ENCODE measurements at regions of chr20 and their contacts with region 1.

Region 1: GRCh38 chr20:45890985-45891983 is at the starts of genes CTSA and NEURL2:
- DNase-seq: peak; percentile 74 to 81 (median 79)
- H3K4me3 ChIP-seq: peak within 1 kb of the TSS; percentile 52 to 86 (median 80)
- H3K27ac ChIP-seq: peak within 1 kb of the TSS; percentile 25 to 70
- H3K4me1 ChIP-seq: peaks cover 8 to 49% (median 41%) of the 10 kb centered on the region in 4 experiments
- H3K27me3 ChIP-seq: no peaks in the 10 kb centered on the region

Region 2: GRCh38 chr20:45798935-45799642 is 92.2 kb before region 1 on chr20:
- CTCF ChIA-PET with region 1: interaction called, 14 read pairs
- POLR2A ChIA-PET with region 1: no interaction called
- DNase-seq: peak; percentile 63 to 77 (median 72)
- H3K4me3 ChIP-seq: no peak overlapping the region
- H3K27ac ChIP-seq: no peak overlapping the region
- H3K4me1 ChIP-seq: peaks cover 0 to 7% (median 0%) of the 10 kb centered on the region in 4 experiments
- H3K27me3 ChIP-seq: no peaks in the 10 kb centered on the region

Region 3: GRCh38 chr20:45905505-45906079 is 14.3 kb after region 1 on chr20:
- CTCF ChIA-PET with region 1: interaction called, 16 read pairs
- POLR2A ChIA-PET with region 1: interaction called, 3 read pairs
- DNase-seq: no peak
- H3K4me3 ChIP-seq: no peak overlapping the region
- H3K27ac ChIP-seq: no peak overlapping the region
- H3K4me1 ChIP-seq: peaks cover 0 to 18% (median 9%) of the 10 kb centered on the region in 4 experiments
- H3K27me3 ChIP-seq: no peaks in the 10 kb centered on the region

Region 4: DNA sequence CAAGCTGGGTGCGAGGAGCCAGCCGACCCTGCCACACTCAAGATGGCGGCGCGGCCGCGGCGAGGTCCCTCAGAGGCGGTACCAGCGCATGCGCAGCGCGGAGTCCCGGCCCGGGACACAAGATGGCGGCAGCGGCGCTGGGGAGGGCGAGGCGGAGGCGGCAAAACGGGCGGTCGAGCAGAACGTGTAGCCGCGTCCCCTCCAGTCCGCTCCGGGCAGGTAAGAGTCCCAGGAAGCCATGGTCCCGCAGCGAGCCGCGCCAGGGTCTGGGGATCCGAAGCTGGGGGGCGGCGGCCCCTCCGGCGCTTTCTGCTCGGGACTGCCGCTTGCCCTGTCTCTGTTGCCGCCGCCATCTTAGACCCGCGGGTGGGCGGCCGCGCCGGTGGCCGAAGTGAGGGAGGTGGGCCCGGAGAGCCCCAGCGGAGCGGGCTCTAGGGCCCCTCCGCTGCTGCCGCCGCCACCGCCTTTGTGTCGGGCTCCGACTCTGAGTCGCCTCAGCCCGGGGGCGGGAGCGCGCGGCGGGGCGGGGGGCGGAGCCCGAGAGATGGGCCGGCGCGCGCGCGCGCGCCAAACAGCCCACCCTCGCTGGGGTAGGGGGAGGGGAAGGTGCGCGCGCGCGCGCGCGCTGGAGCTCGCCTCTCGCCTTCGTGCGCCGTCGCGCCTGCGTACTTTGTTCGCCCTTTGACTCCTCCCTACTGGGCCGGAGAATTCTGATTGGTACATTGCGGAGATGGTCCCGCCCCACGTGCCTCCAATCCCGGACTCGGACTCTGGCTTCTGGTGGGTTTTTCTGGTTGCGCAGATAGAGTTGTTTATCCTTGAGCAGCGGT is 43.5 kb after region 1 on chr20 and contains the start of gene PCIF1:
- CTCF ChIA-PET with region 1: interaction called, 9 read pairs
- POLR2A ChIA-PET with region 1: interaction called, 10 read pairs
- DNase-seq: peak; percentile 97 to 99 (median 98)
- H3K4me3 ChIP-seq: peak within 1 kb of the TSS; percentile 73 to 99 (median 96)
- H3K27ac ChIP-seq: peak within 1 kb of the TSS; percentile 96 to 98
- H3K4me1 ChIP-seq: peaks cover 6 to 39% (median 25%) of the 10 kb centered on the region in 4 experiments
- H3K27me3 ChIP-seq: no peaks in the 10 kb centered on the region

Region 5: DNA sequence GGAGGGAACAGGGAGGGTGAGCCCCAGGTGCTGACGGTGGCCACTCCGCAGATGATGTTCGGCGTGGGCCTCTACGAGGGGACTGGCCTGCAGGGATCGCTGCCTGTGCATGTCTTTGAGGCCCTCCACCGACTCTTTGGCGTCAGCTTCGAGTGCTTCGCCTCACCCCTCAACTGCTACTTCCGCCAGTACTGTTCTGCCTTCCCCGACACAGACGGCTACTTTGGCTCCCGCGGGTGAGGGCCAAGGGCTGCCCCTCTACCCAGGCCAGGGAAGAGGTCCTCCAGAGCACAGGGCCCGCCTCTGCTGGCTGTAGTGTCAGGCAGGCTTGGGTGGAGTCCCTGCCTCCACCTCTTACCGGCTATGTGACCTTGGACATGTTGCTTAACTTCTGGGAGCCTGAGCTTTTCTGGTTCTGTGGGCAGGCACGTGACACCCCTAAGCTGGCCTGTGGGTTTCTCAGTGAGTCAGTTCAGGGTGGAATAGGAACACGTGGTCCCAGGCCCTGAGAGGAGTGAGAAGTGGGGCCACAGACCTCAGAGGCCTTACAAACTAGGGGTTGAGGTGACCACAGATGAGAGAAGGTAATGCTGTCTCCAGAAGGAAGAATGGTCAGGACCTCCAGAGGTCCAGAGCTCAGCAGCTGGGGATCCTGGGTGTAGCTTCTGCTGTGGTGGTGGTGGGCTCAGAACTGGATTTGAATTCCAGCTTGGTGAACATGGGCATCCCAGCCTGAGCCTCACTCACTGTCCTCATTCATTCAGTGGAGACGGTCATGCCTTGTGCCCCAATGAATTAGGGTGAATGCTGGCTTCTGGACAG is 55.1 kb after region 1 on chr20:
- CTCF ChIA-PET with region 1: no interaction called
- POLR2A ChIA-PET with region 1: no interaction called
- DNase-seq: peak in 2 of 3 donors; percentile 40 to 46
- H3K4me3 ChIP-seq: no peak overlapping the region
- H3K27ac ChIP-seq: peak overlapping the region in 1 of 2 experiments; percentile 7
- H3K4me1 ChIP-seq: no peaks in the 10 kb centered on the region
- H3K27me3 ChIP-seq: no peaks in the 10 kb centered on the region

Region 6: GRCh38 chr20:45971675-45972499 is 80.6 kb after region 1 on chr20 and contains the start of gene ZNF335:
- CTCF ChIA-PET with region 1: interaction called, 19 read pairs
- POLR2A ChIA-PET with region 1: no interaction called
- DNase-seq: peak; percentile 97 to 98 (median 98)
- H3K4me3 ChIP-seq: peak within 1 kb of the TSS; percentile 60 to 97 (median 85)
- H3K27ac ChIP-seq: peak within 1 kb of the TSS; percentile 100
- H3K4me1 ChIP-seq: peaks cover 3 to 35% (median 26%) of the 10 kb centered on the region in 4 experiments
- H3K27me3 ChIP-seq: peaks cover 0 to 3% (median 0%) of the 10 kb centered on the region in 5 experiments

Measured in common myeloid progenitor, CD34-positive (primary cell).